ENCODE measurements at regions of chr9 and their contacts with region 1.

Region 1: DNA sequence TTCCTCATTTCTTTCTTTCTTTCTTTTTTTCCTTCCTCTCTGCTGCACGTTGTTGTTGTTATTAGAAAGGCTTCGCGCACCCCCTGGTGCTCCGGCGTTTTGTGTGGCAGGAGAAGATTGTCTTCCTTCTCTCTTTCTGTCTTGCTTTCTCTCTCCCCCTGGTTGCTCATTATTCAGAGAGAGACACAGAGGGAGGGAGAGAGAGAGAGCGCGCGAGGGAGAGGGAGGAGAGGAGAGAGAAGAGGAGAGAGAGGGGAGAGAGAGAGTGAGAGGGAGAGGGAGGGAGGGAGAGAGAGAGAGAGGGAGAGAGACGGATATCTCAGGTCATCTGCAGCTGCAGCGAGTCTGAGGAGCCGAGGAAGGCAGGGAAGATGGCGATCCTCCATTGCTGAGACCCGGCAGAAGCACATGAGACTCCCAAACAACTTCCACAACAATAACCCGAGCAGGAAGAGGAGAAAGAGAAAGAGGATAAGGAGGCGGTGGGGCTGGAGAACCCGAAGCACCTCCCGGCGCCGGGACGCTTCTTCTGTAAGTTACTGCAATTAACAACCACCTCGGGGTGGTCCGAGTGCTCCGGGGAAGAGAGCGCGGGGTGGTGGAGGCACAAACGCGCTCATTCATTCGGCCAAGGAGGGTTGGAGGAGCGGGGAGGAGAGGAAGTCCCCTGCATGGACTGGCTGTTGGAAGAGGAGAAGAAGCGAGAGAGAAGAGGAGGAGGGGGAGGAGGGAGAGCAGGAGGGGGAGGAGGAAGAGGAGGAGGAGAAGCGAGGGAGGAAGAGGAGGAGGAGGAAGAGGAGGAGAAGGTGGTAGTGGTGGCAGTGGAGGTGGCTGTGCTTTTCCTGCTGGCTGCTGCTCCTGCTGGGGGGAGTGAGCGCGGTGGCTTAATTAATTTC is at the start of gene ZNF462:
- DNase-seq: peak; percentile 82
- total RNA-seq, gene ZNF462: 20.0 to 25.7 TPM

Region 2: DNA sequence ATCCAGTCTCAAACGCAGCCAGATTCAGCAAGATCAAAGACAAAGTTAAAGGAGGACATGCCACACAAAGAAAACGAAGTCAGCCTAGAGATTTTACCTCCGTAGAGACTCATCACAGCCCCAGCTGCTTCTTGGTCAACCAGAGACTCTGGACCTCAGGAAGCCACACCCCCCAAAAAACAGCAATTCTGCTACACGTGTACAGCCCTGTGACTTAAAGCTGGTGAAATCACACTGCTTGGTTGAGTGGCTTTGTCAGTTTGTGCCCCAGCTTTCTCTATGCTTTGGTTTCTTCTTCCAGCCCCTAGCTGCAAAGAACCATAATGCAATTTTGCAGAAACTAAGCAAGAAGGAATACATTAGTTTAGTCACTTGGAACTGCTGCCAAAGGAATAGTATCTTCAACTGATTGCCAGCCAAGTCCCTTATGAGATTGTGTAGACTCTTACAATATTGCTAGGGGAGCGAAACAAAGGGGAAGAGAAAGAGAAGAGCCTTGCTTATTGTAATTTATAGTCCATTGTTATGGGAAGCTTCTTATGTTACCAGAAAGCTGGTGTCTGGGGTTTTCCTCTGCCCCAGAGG is 158.9 kb before region 1 on chr9:
- intact Hi-C with region 1: loop called in 1 of 2 experiments (anchors 10 kb)
- DNase-seq: no peak

Region 3: DNA sequence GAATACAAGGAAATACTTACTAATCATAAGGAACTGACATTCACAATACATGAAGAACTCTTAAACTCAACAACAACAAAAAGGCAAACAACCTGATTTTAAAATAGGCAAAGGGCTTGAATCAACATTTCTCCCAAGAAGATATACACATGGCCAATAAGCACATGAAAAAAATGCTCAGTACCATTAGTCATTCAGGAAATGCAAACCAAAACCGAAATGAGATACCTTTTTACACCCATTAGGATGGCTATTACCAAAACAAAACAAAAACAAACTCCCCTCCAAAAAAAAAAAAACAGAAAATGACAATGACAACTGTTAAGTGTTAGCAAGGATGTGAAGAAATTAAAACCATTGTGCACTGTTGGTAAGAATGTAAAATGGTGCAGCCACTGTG is 104.2 kb before region 1 on chr9:
- intact Hi-C with region 1: no loop called
- DNase-seq: no peak

Region 4: DNA sequence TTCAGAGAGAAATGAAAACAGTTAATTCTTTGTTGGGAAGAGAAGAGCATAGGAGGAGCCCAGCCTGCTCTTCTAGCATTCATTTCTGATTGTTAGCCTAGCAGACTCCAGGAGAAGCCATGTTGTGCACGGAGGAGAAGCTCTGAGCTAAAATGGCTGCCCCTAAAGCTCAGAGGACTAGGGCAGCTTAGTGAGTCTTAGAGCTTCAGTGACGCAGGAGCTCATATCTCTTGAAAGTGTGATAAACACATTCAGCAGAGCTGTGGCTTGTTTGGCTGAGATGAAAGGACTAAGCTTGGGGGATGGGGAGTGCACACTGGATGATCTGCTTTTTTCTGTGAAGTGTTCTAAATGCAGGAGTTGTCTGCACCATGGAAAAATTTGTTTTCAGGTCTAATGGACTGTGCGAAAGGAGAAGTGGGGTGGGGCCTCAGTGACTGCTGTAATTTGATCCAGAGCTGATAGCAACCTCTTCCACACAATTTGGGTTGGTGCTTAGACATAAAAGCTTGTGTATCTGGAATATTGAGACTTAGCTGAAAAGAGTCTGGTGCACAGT is 58.3 kb after region 1 on chr9:
- intact Hi-C with region 1: loop called in 1 of 2 experiments (anchors 10 kb)
- DNase-seq: no peak

Measured in posterior vena cava (tissue), 2 donors.